Endothelial cell of umbilical vein (primary cell): ENCODE measurements at regions of chr9 and their contacts with region 1.

Region 1: GRCh38 chr9:124126571-124127289 is 115.2 kb downstream of the LHX2 start:
- DNase-seq: peak; percentile 67
- H3K4me3 ChIP-seq: no peak overlapping the region
- H3K27ac ChIP-seq: no peak overlapping the region
- H3K4me1 ChIP-seq: no peaks in the 10 kb centered on the region
- H3K27me3 ChIP-seq: no peaks in the 10 kb centered on the region
- CTCF ChIP-seq: peak; percentile 90 to 96
- POLR2A ChIP-seq: no peak

Region 2: DNA sequence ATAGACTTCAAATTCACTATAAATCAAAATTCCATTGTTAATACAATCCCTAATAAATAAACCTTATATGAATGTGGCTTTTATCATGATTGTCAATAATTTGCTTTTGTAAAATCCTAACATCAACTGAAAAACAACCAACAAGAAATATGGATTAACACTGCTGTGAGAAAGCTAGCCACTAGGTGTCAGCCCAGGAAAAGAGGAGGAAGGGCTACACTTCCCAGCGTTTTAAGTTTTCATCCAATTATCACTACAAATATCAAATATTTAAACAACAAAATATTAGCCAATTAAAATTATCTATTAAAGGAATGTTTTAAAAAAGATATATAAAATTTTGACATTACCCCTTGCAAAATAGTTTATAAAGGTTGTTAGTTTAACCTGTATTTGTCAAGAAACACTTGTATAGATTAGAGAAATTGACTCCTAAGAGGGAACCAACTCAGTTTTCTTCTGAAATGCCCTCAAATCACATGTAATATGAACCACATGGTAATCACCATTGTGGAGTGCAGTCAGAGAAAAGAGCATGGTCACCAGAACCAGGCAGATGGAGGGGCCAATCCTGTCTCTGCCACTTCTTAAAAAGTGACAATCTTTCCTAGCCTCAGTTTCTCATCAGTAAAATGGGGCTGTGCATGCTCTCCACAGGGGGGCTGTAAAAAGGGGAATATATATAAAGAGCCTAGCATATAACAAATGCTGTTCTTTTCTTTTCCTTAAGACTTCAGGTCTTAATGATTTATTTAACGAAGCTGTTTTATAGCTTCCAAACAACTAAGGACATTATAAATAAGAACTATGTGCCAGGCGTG is 582.5 kb before region 1 on chr9:
- CTCF ChIA-PET with region 1: interaction called, 4 read pairs
- POLR2A ChIA-PET with region 1: no interaction called
- dilution Hi-C with region 1: no loop called
- intact Hi-C with region 1: loop called (anchors 5 kb)
- DNase-seq: peak; percentile 56
- H3K4me3 ChIP-seq: no peak overlapping the region
- H3K27ac ChIP-seq: no peak overlapping the region
- H3K4me1 ChIP-seq: peaks cover 2% of the 10 kb centered on the region
- H3K27me3 ChIP-seq: no peaks in the 10 kb centered on the region
- CTCF ChIP-seq: peak; percentile 58 to 63
- POLR2A ChIP-seq: no peak

Region 3: DNA sequence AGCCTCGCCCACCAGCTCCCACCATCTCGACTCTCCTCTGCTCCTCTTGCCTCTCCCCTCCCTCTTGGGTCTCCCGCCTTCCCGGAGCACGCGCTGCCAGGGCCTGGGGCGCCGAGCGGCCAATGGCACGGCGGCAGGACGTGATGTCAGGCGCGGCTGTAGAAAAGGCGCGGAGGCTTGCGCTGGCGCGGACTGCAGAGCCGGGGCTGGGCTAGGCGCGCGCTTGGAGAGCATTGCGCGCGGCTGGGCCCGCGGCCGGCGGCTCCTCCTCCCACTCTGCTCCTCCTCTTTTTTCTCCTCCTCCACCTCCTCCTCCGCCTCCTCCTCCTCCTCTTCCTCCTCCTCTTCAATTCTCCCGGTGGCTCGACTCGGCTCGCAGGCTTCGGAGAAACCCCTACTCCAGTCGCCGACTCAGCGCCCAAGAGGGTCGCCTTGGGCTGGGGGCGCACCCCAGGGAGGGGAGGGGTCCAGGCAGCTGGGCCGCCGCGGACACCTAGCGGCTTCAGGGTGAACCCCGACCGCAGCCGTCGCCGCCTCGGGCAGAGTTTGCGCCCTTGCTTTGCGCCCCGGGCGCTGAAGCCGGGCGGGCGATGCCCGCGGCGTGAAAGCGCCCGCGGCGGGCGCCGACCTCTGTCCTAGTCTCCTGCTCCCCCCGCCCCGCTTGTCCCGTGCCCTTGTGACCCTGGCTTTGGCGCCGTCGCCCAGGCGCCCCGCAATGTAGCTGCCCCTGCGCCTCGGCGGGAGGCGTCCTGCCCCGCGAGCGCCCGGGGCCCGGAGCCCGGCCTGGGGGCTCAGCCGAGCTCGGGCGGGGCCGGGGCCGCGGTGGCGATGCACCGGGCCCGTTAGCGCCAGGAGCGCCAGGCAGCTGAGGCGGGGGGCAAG is 115.1 kb before region 1 on chr9 and contains the start of gene LHX2:
- CTCF ChIA-PET with region 1: no interaction called
- POLR2A ChIA-PET with region 1: no interaction called
- dilution Hi-C with region 1: no loop called
- intact Hi-C with region 1: no loop called
- DNase-seq: peak; percentile 46
- H3K4me3 ChIP-seq: peak within 1 kb of the TSS in 1 of 3 experiments; percentile 8
- H3K27ac ChIP-seq: no peak within 1 kb of the TSS
- H3K4me1 ChIP-seq: peaks cover 3% of the 10 kb centered on the region
- H3K27me3 ChIP-seq: peaks cover 91 to 97% of the 10 kb centered on the region in 2 experiments
- CTCF ChIP-seq: peak in 1 of 2 donors; percentile 9
- POLR2A ChIP-seq: no peak
- total RNA-seq, gene LHX2: not detected in 2 replicates

Region 4: GRCh38 chr9:124267271-124267807 is 140.6 kb after region 1 on chr9:
- CTCF ChIA-PET with region 1: interaction called, 9 read pairs
- POLR2A ChIA-PET with region 1: no interaction called
- dilution Hi-C with region 1: no loop called
- intact Hi-C with region 1: loop called (anchors 2 kb)
- DNase-seq: peak; percentile 89
- H3K4me3 ChIP-seq: no peak overlapping the region
- H3K27ac ChIP-seq: peak overlapping the region; percentile 87
- H3K4me1 ChIP-seq: peaks cover 72% of the 10 kb centered on the region
- H3K27me3 ChIP-seq: no peaks in the 10 kb centered on the region
- CTCF ChIP-seq: peak in 1 of 2 donors; percentile 15
- POLR2A ChIP-seq: peak; percentile 79

Region 5: GRCh38 chr9:124297553-124297905 is 170.8 kb after region 1 on chr9:
- CTCF ChIA-PET with region 1: interaction called, 18 read pairs
- POLR2A ChIA-PET with region 1: no interaction called
- dilution Hi-C with region 1: no loop called
- intact Hi-C with region 1: no loop called
- DNase-seq: peak; percentile 95
- H3K4me3 ChIP-seq: no peak overlapping the region
- H3K27ac ChIP-seq: peak overlapping the region; percentile 71
- H3K4me1 ChIP-seq: peaks cover 70% of the 10 kb centered on the region
- H3K27me3 ChIP-seq: no peaks in the 10 kb centered on the region
- CTCF ChIP-seq: no peak
- POLR2A ChIP-seq: peak; percentile 68

Region 6: GRCh38 chr9:124326378-124326777 is 199.6 kb after region 1 on chr9:
- CTCF ChIA-PET with region 1: interaction called, 41 read pairs
- POLR2A ChIA-PET with region 1: no interaction called
- dilution Hi-C with region 1: no loop called
- intact Hi-C with region 1: no loop called
- DNase-seq: no peak
- H3K4me3 ChIP-seq: no peak overlapping the region
- H3K27ac ChIP-seq: no peak overlapping the region
- H3K4me1 ChIP-seq: no peaks in the 10 kb centered on the region
- H3K27me3 ChIP-seq: no peaks in the 10 kb centered on the region
- CTCF ChIP-seq: no peak
- POLR2A ChIP-seq: no peak

Region 7: GRCh38 chr9:124386201-124386600 is 259.5 kb after region 1 on chr9:
- CTCF ChIA-PET with region 1: interaction called, 33 read pairs
- POLR2A ChIA-PET with region 1: no interaction called
- dilution Hi-C with region 1: no loop called
- intact Hi-C with region 1: loop called (anchors 5 kb)
- DNase-seq: peak; percentile 8
- H3K4me3 ChIP-seq: no peak overlapping the region
- H3K27ac ChIP-seq: no peak overlapping the region
- H3K4me1 ChIP-seq: peaks cover 22% of the 10 kb centered on the region
- H3K27me3 ChIP-seq: no peaks in the 10 kb centered on the region
- CTCF ChIP-seq: no peak
- POLR2A ChIP-seq: no peak